IMR-90 (cell line): ENCODE measurements at regions of chr11 and their contacts with region 1.

Region 1: DNA sequence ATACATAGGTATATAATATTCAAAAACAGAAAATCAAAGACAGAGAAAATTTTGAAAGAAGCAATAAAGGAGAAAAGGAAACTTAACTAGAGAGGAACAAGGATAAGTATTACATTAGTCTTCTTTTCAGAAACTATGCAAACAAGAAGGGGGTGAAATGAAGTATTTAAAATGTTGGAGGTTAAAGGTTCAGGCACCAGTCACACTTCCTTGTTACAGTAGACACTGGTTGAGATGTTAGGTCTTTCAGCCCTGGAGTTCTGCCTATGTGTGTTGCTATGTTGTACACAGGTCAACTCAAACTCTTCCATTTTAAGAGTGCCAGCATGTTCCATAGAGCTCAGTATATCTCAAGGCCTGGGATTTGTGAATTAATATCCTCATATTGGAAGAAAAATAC is 6.0 kb upstream of the MS4A4A start:
- DNase-seq: no peak
- ATAC-seq: no peak
- H3K4me3 ChIP-seq: no peak overlapping the region
- H3K27ac ChIP-seq: no peak overlapping the region
- H3K4me1 ChIP-seq: no peaks in the 10 kb centered on the region
- H3K27me3 ChIP-seq: no peaks in the 10 kb centered on the region
- CTCF ChIP-seq: no peak
- POLR2A ChIP-seq: no peak
- RAD21 ChIP-seq: no peak

Region 2: GRCh38 chr11:60328460-60328859 is 54.0 kb after region 1 on chr11:
- CTCF ChIA-PET with region 1: no interaction called
- POLR2A ChIA-PET with region 1: no interaction called
- dilution Hi-C with region 1: no loop called
- in situ Hi-C with region 1: loop called (anchors 10 kb)
- intact Hi-C with region 1: no loop called
- DNase-seq: no peak
- ATAC-seq: no peak
- H3K4me3 ChIP-seq: no peak overlapping the region
- H3K27ac ChIP-seq: no peak overlapping the region
- H3K4me1 ChIP-seq: no peaks in the 10 kb centered on the region
- H3K27me3 ChIP-seq: no peaks in the 10 kb centered on the region
- CTCF ChIP-seq: no peak
- POLR2A ChIP-seq: no peak
- RAD21 ChIP-seq: no peak

Region 3: GRCh38 chr11:60428517-60428916 is 154.1 kb after region 1 on chr11:
- CTCF ChIA-PET with region 1: no interaction called
- POLR2A ChIA-PET with region 1: no interaction called
- dilution Hi-C with region 1: no loop called
- in situ Hi-C with region 1: no loop called
- intact Hi-C with region 1: no loop called
- DNase-seq: no peak
- ATAC-seq: no peak
- H3K4me3 ChIP-seq: no peak overlapping the region
- H3K27ac ChIP-seq: no peak overlapping the region
- H3K4me1 ChIP-seq: no peaks in the 10 kb centered on the region
- H3K27me3 ChIP-seq: no peaks in the 10 kb centered on the region
- CTCF ChIP-seq: no peak
- POLR2A ChIP-seq: no peak
- RAD21 ChIP-seq: no peak